H1 (cell line): ENCODE measurements at regions of chr4 and their contacts with region 1.

Region 1: GRCh38 chr4:101050088-101050836 is 297.1 kb downstream of the PPP3CA start:
- DNase-seq: no peak
- H3K4me3 ChIP-seq: no peak overlapping the region
- H3K27ac ChIP-seq: no peak overlapping the region
- H3K4me1 ChIP-seq: peaks cover 0 to under 1% (median 0%) of the 10 kb centered on the region in 4 experiments; a peak in 2 of 7 replicates
- H3K27me3 ChIP-seq: no peaks in the 10 kb centered on the region
- CTCF ChIP-seq: no peak
- EP300 ChIP-seq: no peak
- POLR2A ChIP-seq: no peak
- RAD21 ChIP-seq: no peak

Region 2: DNA sequence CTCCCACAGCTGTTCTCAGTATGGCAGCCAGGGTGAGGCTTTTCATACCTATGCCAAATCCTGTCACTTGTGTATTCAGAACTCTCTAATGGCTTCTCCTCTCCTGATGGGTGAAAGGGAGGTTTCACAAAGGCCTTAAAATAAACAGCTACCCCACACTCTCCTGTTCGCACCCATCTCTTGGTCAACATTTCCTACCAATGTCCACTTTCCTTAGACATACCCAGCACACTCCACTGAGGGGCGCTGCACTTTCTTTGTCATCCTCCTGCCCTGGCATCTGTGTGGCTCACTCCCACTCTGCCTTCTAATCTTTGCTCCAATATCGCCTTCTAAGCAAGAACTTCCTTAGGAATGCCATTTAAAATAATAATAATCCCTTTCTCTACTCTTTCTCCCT is 16.3 kb before region 1 on chr4:
- CTCF ChIA-PET with region 1: interaction called, 11 read pairs
- POLR2A ChIA-PET with region 1: no interaction called
- DNase-seq: no peak
- H3K4me3 ChIP-seq: no peak overlapping the region
- H3K27ac ChIP-seq: no peak overlapping the region
- H3K4me1 ChIP-seq: peaks cover 0 to 7% (median 5%) of the 10 kb centered on the region in 4 experiments; a peak in 4 of 7 replicates
- H3K27me3 ChIP-seq: no peaks in the 10 kb centered on the region; a peak in 1 of 7 replicates
- CTCF ChIP-seq: peak; percentile 58 to 69 (median 67)
- EP300 ChIP-seq: no peak
- POLR2A ChIP-seq: no peak
- RAD21 ChIP-seq: peak; percentile 57 to 68